Panc1 (cell line): ENCODE measurements at regions of chr18 and their contacts with region 1.

Region 1: DNA sequence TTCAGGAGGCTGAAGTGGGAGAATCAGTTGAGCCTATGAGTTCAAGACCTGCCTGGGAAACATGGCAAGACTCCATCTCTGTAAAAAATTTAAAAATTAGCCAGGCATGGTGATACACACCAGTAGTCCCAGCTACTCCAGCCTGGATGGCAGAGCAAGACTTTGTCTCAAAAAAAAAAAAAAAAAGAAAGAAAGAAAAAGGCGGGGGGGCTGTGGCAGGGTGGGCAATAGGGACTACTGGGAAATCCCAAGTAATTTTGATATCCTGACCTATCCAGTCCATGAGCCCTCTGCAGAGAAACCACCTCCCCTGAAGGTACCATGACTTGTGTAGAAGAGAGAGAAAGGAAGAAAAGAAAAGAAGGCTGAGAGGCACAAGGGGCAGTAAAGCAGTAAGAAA is 45.3 kb downstream of the ALPK2 start:
- DNase-seq: no peak
- ATAC-seq: no peak
- H3K4me3 ChIP-seq: no peak overlapping the region
- H3K27ac ChIP-seq: no peak overlapping the region; the same call in 1 of the 2 replicates
- H3K4me1 ChIP-seq: peaks cover 7% of the 10 kb centered on the region; the same call in 1 of the 2 replicates
- H3K27me3 ChIP-seq: no peaks in the 10 kb centered on the region
- CTCF ChIP-seq: no peak

Region 2: GRCh38 chr18:58363767-58364540 is 219.6 kb before region 1 on chr18:
- CTCF ChIA-PET with region 1: interaction called, 11 read pairs
- POLR2A ChIA-PET with region 1: no interaction called
- in situ Hi-C with region 1: no loop called
- intact Hi-C with region 1: no loop called
- DNase-seq: no peak
- ATAC-seq: no peak
- H3K4me3 ChIP-seq: no peak overlapping the region
- H3K27ac ChIP-seq: no peak overlapping the region
- H3K4me1 ChIP-seq: no peaks in the 10 kb centered on the region
- H3K27me3 ChIP-seq: no peaks in the 10 kb centered on the region
- CTCF ChIP-seq: no peak

Region 3: GRCh38 chr18:58768293-58768974 is 184.9 kb after region 1 on chr18:
- CTCF ChIA-PET with region 1: no interaction called
- POLR2A ChIA-PET with region 1: no interaction called
- in situ Hi-C with region 1: no loop called
- intact Hi-C with region 1: no loop called
- DNase-seq: no peak
- ATAC-seq: peak; percentile 97
- H3K4me3 ChIP-seq: peak overlapping the region; percentile 26 to 37
- H3K27ac ChIP-seq: no peak overlapping the region
- H3K4me1 ChIP-seq: no peaks in the 10 kb centered on the region
- H3K27me3 ChIP-seq: no peaks in the 10 kb centered on the region
- CTCF ChIP-seq: peak; percentile 79

Region 4: DNA sequence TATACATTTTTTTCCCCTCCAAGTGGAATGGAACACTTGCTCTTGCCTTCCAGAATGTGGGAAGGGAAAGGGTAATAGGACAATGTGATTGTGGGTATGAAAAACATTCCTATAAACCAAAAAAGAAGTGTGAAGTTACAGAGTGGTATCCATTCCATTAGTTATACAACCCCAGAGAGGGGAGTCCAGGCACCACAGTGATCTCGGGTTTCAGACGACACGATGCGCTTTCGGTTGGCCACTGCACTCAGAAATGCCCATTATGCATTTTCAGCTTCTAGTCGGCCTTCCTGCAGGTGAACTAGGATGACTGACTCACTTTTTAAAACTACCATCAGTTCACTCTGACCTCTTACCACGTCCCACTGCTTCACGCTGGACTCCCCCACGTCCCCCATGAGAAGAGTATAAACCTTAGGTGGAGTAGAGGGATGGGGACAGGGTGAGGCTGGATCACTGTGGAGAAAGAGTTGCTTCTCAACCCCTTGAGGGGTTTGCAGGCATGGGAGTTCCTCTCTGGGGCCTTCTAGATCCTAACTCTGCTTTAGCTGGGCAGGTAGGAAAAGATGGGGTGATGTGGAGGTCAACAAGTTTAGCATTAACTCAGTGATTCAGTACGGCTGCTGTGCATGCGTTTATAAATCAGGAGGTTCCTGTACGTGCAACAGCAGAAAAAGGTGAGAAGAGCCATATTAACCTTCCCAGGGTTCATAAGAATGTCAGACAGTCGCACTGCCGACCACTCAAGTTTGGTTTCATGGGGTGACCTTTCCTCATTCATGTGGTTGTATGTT is 331.6 kb after region 1 on chr18:
- CTCF ChIA-PET with region 1: no interaction called
- POLR2A ChIA-PET with region 1: no interaction called
- in situ Hi-C with region 1: no loop called
- intact Hi-C with region 1: no loop called
- DNase-seq: no peak
- ATAC-seq: no peak
- H3K4me3 ChIP-seq: no peak overlapping the region
- H3K27ac ChIP-seq: no peak overlapping the region
- H3K4me1 ChIP-seq: peaks cover 10% of the 10 kb centered on the region
- H3K27me3 ChIP-seq: no peaks in the 10 kb centered on the region
- CTCF ChIP-seq: no peak

Region 5: DNA sequence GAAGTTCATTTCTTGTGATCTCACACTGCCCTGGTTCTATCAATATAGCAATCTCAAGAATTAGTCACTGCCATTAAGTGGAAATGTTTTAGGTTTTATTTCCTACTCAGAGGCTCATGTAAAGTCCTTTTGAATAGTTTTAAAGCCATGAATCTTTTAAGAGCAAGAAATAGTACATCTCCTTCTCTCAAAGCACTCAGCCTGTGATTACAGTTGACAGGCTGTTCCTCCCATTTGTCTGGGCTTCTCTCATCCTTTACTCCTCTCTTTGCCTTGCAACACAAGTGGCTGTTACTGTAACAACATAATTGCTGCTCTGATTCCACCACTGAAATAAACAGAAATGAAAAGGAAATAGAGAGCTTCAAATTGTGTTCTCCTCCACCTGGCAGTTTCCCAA is 654.8 kb after region 1 on chr18:
- CTCF ChIA-PET with region 1: no interaction called
- POLR2A ChIA-PET with region 1: no interaction called
- in situ Hi-C with region 1: no loop called
- intact Hi-C with region 1: no loop called
- DNase-seq: no peak
- ATAC-seq: no peak
- H3K4me3 ChIP-seq: no peak overlapping the region
- H3K27ac ChIP-seq: no peak overlapping the region
- H3K4me1 ChIP-seq: no peaks in the 10 kb centered on the region
- H3K27me3 ChIP-seq: no peaks in the 10 kb centered on the region
- CTCF ChIP-seq: no peak